Posterior cingulate gyrus (tissue), 11 donors: ENCODE measurements at regions of chr6 and their contacts with region 1.

Region 1: DNA sequence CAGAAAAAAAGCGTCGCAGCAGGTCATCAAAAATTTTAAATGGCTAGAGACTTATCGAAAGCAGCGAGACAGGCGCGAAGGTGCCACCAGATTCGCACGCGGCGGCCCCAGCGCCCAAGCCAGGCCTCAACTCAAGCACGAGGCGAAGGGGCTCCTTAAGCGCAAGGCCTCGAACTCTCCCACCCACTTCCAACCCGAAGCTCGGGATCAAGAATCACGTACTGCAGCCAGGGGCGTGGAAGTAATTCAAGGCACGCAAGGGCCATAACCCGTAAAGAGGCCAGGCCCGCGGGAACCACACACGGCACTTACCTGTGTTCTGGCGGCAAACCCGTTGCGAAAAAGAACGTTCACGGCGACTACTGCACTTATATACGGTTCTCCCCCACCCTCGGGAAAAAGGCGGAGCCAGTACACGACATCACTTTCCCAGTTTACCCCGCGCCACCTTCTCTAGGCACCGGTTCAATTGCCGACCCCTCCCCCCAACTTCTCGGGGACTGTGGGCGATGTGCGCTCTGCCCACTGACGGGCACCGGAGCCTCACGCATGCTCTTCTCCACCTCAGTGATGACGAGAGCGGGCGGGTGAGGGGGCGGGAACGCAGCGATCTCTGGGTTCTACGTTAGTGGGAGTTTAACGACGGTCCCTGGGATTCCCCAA is at the start of gene EEF1A1:
- DNase-seq: peak; percentile 98 to 100 (median 98)

Region 2: GRCh38 chr6:73580247-73581149 is 59.7 kb after region 1 on chr6:
- intact Hi-C with region 1: loop called (anchors 1 kb)
- DNase-seq: peak; percentile 55 to 97 (median 78)

Region 3: GRCh38 chr6:73653571-73654424 is 133.0 kb after region 1 on chr6 and contains the start of gene SLC17A5:
- intact Hi-C with region 1: loop called (anchors 1 kb)
- DNase-seq: peak; percentile 90 to 98 (median 94)

Region 4: DNA sequence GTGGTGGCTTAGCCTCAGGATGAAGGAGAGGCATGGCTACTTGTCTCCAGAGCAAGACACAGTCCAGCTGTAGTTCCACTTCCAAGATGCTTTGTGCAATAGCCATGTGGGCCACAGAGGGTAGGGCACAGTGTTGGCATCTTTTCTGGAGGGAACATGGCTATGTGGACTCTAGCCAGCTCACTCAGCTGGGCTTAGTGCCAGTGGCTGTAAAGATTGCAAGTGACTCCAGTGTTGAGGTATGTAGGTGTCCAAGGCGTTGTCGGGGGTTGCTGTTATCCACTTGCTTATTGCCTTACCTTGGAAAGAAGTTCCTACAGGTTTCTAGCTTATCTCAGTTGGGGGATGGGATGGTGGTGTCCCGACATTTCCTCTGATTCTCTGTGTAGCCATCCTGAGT is 408.6 kb after region 1 on chr6:
- intact Hi-C with region 1: no loop called
- DNase-seq: no peak